ENCODE measurements at regions of chr12 and their contacts with region 1.

Region 1: DNA sequence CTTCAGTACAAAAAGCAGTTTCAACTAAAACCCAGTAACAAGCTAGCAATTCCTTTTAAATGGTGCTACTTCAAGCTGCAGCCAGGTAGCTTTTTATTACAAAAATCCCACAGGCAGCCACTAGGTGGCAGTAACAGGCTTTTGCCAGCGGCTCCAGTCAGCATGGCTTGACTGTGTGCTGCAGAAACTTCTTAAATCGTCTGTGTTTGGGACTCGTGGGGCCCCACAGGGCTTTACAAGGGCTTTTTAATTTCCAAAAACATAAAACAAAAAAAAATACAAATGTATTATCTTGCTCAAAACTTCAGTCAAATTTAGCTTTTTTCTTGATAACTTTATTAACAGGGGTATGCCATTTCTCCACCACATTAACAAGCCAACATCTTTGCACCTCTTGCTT is 3.6 kb upstream of the CLEC4E start:
- DNase-seq: peak; percentile 71 to 87
- H3K4me3 ChIP-seq: no peak overlapping the region
- H3K27ac ChIP-seq: no peak overlapping the region
- H3K4me1 ChIP-seq: no peaks in the 10 kb centered on the region
- H3K27me3 ChIP-seq: no peaks in the 10 kb centered on the region
- CTCF ChIP-seq: peak; percentile 39 to 87 (median 79)
- EP300 ChIP-seq: no peak
- POLR2A ChIP-seq: no peak
- RAD21 ChIP-seq: peak; percentile 80 to 86

Region 2: DNA sequence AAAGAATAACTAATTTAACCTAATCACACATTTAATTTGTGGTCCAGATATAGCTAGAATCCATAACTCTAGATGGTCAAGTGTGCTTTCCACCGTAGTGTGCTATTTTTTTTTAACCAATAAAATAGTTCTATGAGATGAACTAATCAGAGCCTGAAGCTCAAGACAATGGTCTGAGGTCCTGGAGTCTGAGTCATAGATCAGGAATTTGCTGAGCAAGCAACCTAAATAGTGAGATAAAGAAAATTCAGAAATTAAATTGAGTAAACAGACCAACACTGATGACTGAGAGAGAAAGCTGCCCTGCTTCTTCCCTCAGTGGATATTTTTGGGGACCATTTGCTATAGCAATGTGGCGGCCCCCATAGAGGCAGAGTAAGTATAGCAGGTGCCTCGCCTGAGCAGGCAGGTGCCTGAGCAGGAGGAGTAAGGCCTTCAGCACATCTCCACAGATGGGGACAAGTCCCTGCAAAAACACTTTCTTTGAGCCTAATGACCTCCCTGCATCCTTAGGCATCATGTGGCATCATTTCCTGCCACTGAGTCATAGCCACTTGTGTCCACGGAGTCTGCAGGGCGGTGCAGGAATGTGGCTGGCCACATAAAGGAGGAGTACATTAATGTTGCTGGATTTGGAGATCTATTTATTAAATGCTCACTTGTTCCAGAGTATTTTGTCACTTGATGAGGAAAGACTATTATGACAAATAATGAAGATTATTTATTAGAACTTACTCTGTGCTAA is 10.3 kb after region 1 on chr12:
- CTCF ChIA-PET with region 1: interaction called, 16 read pairs
- POLR2A ChIA-PET with region 1: interaction called, 3 read pairs
- DNase-seq: no peak
- H3K4me3 ChIP-seq: no peak overlapping the region
- H3K27ac ChIP-seq: no peak overlapping the region
- H3K4me1 ChIP-seq: no peaks in the 10 kb centered on the region
- H3K27me3 ChIP-seq: no peaks in the 10 kb centered on the region
- CTCF ChIP-seq: no peak
- EP300 ChIP-seq: no peak
- POLR2A ChIP-seq: no peak
- RAD21 ChIP-seq: no peak

Region 3: DNA sequence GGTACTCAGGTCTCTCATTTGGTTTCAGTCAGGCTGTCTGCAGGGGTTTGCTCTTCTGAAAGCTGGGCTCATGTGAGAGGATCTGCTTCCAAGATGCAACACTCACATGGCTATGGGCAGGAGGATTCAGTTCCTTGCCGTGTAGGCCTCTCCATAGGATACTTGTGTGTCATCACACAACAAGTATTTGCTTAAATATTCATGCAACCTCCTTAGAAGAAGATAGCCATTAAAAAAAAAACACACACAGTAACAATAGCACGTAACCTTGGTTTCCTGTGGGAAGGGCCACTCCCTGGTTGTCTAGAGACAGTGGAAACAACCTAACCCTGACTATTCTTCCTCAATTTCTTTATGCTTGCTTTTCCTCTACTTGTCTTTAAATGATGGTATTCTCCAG is 28.2 kb after region 1 on chr12:
- CTCF ChIA-PET with region 1: interaction called, 12 read pairs
- POLR2A ChIA-PET with region 1: no interaction called
- DNase-seq: no peak
- H3K4me3 ChIP-seq: no peak overlapping the region
- H3K27ac ChIP-seq: no peak overlapping the region
- H3K4me1 ChIP-seq: no peaks in the 10 kb centered on the region
- H3K27me3 ChIP-seq: no peaks in the 10 kb centered on the region
- CTCF ChIP-seq: no peak
- EP300 ChIP-seq: no peak
- POLR2A ChIP-seq: no peak
- RAD21 ChIP-seq: no peak

Region 4: GRCh38 chr12:8590842-8591550 is 46.7 kb after region 1 on chr12:
- CTCF ChIA-PET with region 1: interaction called, 10 read pairs
- POLR2A ChIA-PET with region 1: no interaction called
- DNase-seq: no peak
- H3K4me3 ChIP-seq: no peak overlapping the region
- H3K27ac ChIP-seq: no peak overlapping the region
- H3K4me1 ChIP-seq: no peaks in the 10 kb centered on the region
- H3K27me3 ChIP-seq: no peaks in the 10 kb centered on the region
- CTCF ChIP-seq: peak in 2 of 3 experiments; percentile 21 to 33; a peak in 2 of 4 replicates
- EP300 ChIP-seq: no peak
- POLR2A ChIP-seq: no peak
- RAD21 ChIP-seq: no peak; a peak in 1 of 4 replicates

Region 5: DNA sequence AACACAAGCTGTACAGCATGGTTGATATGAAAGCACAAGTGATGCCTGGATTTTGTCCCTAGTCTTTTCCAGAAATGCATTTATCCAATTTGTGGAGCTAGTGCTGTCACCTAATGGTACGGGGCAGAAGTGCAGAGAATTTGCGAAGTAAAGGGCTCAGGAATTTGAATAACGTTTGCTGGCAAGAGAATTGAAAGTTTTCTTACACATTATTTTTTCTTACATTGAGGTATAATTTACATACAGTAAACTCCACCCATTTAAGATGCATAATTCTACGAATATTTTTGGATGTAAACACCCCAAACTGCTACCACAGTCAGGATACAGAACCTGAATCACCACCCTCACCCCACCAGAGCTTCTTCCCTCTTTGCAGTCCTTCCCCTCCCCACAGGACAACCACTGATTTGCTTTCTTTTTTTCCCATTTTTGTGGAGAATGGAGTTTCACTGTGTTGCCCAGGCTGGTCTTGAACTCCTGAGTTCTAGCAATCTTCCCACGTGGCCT is 64.8 kb after region 1 on chr12:
- CTCF ChIA-PET with region 1: interaction called, 39 read pairs
- POLR2A ChIA-PET with region 1: no interaction called
- DNase-seq: no peak
- H3K4me3 ChIP-seq: no peak overlapping the region; a peak in 2 of 8 replicates
- H3K27ac ChIP-seq: no peak overlapping the region
- H3K4me1 ChIP-seq: peaks cover 0 to 4% (median 0%) of the 10 kb centered on the region in 4 experiments; a peak in 2 of 7 replicates
- H3K27me3 ChIP-seq: peaks cover 0 to 4% (median 0%) of the 10 kb centered on the region in 4 experiments; a peak in 3 of 7 replicates
- CTCF ChIP-seq: peak in 2 of 3 experiments; percentile 65 to 79; a peak in 3 of 4 replicates
- EP300 ChIP-seq: no peak
- POLR2A ChIP-seq: no peak
- RAD21 ChIP-seq: peak; percentile 66 to 75

Measured in H1 (cell line).